ENCODE measurements at regions of chr22 and their contacts with region 1.

Region 1: DNA sequence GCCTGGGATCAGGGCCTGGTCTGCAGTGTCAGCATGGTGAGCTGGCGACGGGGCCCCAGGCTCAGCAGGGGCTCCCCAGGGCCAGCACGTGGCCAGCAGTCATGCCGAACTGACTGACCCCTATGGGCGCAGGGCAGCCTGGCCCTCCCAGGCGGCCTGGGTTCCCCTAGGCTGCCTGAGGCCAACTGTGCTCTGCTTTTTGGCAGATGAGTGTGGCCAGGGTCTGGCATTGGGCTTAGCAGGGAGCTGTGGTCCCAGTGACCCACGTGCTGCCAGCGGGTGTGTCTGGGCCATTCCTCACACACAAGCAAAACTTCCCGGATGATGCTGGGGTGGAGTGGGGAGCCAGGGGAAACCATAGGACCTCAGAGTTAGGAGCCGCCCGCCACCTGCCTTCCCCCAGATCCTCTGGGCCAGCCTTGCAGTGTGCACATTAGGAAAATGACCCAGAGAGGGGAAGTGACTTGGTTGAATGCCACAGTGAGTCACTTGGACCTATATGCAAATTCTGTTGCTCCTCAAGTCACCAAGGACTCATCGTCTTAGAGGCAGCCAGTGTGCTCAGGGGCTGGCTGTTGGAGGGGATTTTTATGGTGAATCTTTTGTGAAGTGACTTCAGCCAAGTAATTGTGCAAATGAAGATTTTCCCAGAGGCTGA is 6.5 kb downstream of the ADORA2A start:
- DNase-seq: no peak
- H3K4me3 Mint-ChIP-seq: peak overlapping the region; percentile 67
- H3K27ac Mint-ChIP-seq: peak overlapping the region; percentile 100
- H3K4me1 Mint-ChIP-seq: peaks cover 72% of the 10 kb centered on the region
- H3K27me3 Mint-ChIP-seq: no peaks in the 10 kb centered on the region

Region 2: GRCh38 chr22:24355574-24355973 is 78.4 kb before region 1 on chr22:
- intact Hi-C with region 1: no loop called
- DNase-seq: no peak
- H3K4me3 Mint-ChIP-seq: no peak overlapping the region
- H3K27ac Mint-ChIP-seq: no peak overlapping the region
- H3K4me1 Mint-ChIP-seq: peaks cover 31% of the 10 kb centered on the region
- H3K27me3 Mint-ChIP-seq: no peaks in the 10 kb centered on the region

Region 3: DNA sequence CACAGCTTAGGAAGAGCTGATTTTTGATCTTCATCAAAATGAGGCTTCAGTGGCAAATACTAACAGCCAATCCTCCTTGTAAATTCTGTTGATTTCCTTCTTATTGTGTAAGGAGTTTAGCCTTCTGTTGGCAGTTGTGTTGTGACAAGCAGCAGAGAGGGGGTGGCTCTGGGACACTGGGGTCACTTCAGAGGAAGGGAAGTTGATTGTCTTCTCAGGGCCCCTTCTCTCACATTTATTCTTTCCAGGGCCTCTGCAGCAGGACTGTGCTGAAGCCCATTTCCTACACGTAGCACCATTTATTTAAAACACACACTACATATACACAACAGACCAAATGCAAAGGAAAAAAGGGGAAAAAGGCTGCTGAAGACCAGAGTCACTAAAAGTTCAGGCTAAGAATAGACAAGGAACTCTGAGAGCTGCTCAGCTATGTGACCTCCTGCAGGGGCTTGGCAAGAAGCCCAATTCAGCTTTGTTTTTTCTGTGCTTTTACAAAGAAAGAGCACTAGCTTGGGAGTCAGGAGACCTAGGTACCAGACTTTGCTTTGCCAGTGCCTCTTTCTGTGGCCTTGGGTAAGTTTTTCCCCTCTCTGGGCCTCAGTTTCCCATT is 32.9 kb after region 1 on chr22:
- intact Hi-C with region 1: loop called (anchors 5 kb)
- DNase-seq: no peak
- H3K4me3 Mint-ChIP-seq: no peak overlapping the region
- H3K27ac Mint-ChIP-seq: no peak overlapping the region
- H3K4me1 Mint-ChIP-seq: peaks cover 6% of the 10 kb centered on the region
- H3K27me3 Mint-ChIP-seq: no peaks in the 10 kb centered on the region

Region 4: DNA sequence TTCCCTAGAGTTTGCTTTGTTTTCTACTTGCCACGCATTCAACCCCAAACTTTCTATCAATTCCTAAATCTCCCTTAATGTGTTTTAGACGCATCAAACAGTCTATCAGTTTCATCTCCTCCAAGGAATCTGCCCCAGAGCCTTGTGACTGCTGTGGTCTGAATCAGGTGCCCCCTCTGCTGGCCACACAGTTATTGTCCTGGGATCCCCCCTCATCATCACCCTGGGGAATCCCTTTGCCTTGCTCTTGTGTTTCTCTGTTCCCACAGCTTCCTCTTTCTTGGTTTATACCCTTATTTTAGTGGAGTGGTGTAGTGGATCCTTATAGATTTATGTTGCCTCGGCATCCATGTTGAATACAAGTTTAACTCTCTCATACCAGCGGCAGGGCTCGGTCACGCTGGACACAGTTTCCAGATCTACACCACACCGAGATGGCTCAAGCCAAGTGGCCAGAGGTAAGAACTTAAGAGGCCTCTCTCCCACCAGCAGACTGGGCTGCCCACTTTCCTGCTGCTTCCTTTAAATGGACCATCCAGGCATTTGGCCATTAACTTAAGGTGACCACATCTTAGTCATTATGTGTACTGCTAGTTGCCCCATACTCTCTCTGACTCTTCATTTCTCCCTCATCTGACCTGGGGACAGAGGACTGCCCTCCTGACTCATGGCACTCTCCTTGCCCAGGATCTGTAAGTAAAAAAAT is 69.3 kb after region 1 on chr22:
- intact Hi-C with region 1: loop called (anchors 5 kb)
- DNase-seq: no peak
- H3K4me3 Mint-ChIP-seq: no peak overlapping the region
- H3K27ac Mint-ChIP-seq: no peak overlapping the region
- H3K4me1 Mint-ChIP-seq: peaks cover 17% of the 10 kb centered on the region
- H3K27me3 Mint-ChIP-seq: peaks cover 17% of the 10 kb centered on the region

Region 5: DNA sequence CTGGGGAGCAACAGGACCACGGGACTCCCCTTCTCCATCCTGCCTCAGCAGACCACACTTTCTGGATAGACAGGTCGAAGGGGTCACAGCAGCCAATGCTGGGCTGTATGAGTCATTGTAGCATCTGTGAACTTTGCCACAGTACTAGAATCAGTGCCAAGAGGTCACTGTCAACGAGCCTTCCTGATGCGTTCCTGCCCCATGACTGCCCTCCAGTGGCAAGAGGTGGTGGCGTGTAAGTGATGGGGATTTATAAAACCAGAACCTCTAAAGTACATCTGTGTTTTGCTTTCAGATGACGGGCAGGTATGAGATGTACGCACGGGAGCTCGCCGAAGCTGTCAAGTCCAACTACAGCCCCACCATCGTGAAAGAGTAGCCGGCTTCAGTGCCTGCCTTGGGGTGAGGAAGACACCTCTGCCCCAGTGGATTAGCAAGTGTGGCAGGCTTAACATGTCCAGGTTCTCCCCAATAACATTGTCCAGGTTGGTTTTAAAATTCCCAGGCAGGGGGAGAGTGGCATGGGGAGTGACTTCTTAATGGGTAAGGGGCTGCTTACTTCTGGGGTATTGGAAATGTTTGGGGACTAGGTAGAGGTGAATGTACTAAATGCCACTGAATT is 91.6 kb after region 1 on chr22:
- intact Hi-C with region 1: loop called (anchors 2 kb)
- DNase-seq: peak; percentile 76
- H3K4me3 Mint-ChIP-seq: no peak overlapping the region
- H3K27ac Mint-ChIP-seq: no peak overlapping the region
- H3K4me1 Mint-ChIP-seq: peaks cover 11% of the 10 kb centered on the region
- H3K27me3 Mint-ChIP-seq: peaks cover 4% of the 10 kb centered on the region